ENCODE measurements at regions of chr19 and their contacts with region 1.

Region 1: GRCh38 chr19:48954595-48955310 is at the start of gene BAX:
- DNase-seq: peak; percentile 97 to 99 (median 98)
- ATAC-seq: peak; percentile 82 to 95 (median 90)
- H3K4me3 ChIP-seq: peak within 1 kb of the TSS; percentile 77 to 98 (median 90)
- H3K27ac ChIP-seq: peak within 1 kb of the TSS; percentile 69 to 95 (median 89)
- H3K4me1 ChIP-seq: peaks cover 4 to 23% (median 14%) of the 10 kb centered on the region in 12 donors
- H3K27me3 ChIP-seq: no peaks in the 10 kb centered on the region
- CTCF ChIP-seq: peak in 1 of 12 donors; percentile 7
- POLR2A ChIP-seq: peak in 1 of 2 donors; percentile 87
- total RNA-seq, gene BAX: 17.9 to 68.4 (median 23.1) TPM

Region 2: GRCh38 chr19:48872182-48872883 is 82.4 kb before region 1 on chr19 and contains the start of gene PPP1R15A:
- intact Hi-C with region 1: loop called in 1 of 10 experiments (anchors 5 kb)
- DNase-seq: peak; percentile 97 to 99 (median 97)
- ATAC-seq: peak; percentile 62 to 82 (median 72)
- H3K4me3 ChIP-seq: peak within 1 kb of the TSS; percentile 75 to 99 (median 89)
- H3K27ac ChIP-seq: peak within 1 kb of the TSS; percentile 98 to 100 (median 100)
- H3K4me1 ChIP-seq: peaks cover 11 to 60% (median 41%) of the 10 kb centered on the region in 12 donors
- H3K27me3 ChIP-seq: no peaks in the 10 kb centered on the region
- CTCF ChIP-seq: peak in 3 of 12 donors; percentile 7 to 19 (median 10)
- POLR2A ChIP-seq: peak; percentile 93 to 99
- total RNA-seq, gene PPP1R15A: 51.7 to 88.2 (median 62.6) TPM

Region 3: DNA sequence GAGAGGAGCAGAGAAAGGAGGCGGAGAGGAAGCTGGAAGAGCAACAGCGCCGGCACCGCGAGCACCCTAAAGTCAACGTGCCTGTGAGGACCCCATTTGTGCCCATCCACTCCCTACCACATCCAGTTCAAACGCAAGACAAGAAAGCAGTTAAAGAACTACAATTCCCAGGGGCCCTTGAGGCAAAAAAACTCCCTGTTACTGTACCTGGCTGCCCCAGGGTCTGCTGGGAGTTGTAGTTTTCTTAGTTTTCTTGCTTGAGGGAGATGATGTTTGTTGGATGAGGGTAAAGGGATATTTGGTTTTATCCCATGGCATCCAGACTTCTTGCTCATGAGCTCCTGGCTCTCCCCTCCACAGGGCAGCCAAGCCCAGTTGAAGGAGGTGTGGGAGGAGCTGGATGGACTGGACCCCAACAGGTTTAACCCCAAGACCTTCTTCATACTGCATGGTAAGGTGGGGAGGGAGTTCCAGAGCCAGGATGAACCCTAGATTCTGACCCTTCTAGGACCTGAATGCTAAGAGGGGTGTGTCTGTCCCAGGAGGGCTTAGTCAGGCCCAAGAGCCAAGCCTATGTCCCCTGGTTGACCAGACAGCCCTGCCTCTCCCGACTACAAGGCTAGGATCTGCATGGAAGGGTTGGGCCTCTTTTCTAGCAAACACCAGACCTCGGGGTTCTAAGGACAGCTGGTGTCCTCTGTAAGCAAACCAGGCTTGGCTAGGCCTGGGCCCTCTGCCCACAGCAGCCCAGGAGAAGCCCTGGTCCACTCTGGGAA is 41.5 kb before region 1 on chr19:
- intact Hi-C with region 1: loop called in 3 of 10 experiments (anchors 5 to 10 kb)
- DNase-seq: no peak
- ATAC-seq: no peak
- H3K4me3 ChIP-seq: no peak overlapping the region
- H3K27ac ChIP-seq: no peak overlapping the region
- H3K4me1 ChIP-seq: peaks cover 0 to 13% (median 7%) of the 10 kb centered on the region in 12 donors
- H3K27me3 ChIP-seq: no peaks in the 10 kb centered on the region
- CTCF ChIP-seq: no peak
- POLR2A ChIP-seq: no peak